ENCODE measurements at regions of chr17 and their contacts with region 1.

Region 1: DNA sequence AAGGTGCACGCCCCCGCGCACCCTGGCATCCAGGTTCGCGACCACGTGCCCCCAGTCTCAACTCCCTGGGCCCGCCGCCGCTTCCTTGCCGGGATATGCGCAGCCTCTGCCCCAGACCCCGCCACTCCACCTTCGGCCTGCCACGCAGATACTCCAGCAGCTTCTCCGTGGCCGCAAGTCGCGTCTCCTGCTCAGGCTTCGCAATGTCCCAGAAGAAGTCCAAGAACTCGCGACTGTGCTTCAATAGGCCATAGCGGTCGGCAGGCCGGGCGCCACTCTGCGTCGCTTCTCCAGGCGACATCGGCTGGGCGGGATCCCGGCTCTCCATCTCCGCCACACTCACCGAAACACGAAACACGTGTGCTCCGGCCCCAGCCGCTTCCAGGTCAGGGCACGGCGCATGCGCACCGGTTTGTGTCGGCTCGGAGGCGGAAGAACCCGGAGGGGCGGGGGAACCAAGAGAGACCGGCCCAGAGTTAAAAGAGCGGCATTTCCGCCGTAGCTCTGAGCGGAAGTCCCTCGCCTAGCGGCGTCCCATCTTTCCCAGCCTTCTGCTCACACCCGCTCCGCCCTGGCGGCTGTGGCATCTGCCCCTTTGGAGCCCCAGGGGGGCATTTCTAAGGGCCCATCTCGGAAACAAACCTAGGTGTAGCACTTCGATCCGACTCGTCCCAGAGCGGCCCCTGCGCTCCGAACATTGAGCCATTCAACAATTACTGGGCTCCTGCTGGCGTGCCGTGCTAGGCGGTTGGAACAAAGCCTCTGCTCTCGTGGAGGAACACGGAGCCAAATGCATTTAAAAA is at the start of gene MYBBP1A:
- H3K4me3 ChIP-seq: peak within 1 kb of the TSS; percentile 73
- H3K27ac ChIP-seq: peak within 1 kb of the TSS; percentile 75
- H3K4me1 ChIP-seq: peaks cover 6% of the 10 kb centered on the region; the same call in 1 of the 2 replicates
- CTCF ChIP-seq: peak; percentile 66

Region 2: GRCh38 chr17:4543557-4544026 is 11.6 kb before region 1 on chr17:
- CTCF ChIA-PET with region 1: interaction called, 3 read pairs
- POLR2A ChIA-PET with region 1: interaction called, 16 read pairs
- H3K4me3 ChIP-seq: no peak overlapping the region
- H3K27ac ChIP-seq: no peak overlapping the region
- H3K4me1 ChIP-seq: no peaks in the 10 kb centered on the region
- CTCF ChIP-seq: no peak

Region 3: GRCh38 chr17:4665027-4665426 is 109.8 kb after region 1 on chr17:
- CTCF ChIA-PET with region 1: no interaction called
- POLR2A ChIA-PET with region 1: no interaction called
- H3K4me3 ChIP-seq: no peak overlapping the region
- H3K27ac ChIP-seq: no peak overlapping the region
- H3K4me1 ChIP-seq: no peaks in the 10 kb centered on the region
- CTCF ChIP-seq: no peak

Measured in HEK293 (cell line).